Transverse colon (tissue), 4 donors: ENCODE measurements at regions of chr1 and their contacts with region 1.

Region 1: DNA sequence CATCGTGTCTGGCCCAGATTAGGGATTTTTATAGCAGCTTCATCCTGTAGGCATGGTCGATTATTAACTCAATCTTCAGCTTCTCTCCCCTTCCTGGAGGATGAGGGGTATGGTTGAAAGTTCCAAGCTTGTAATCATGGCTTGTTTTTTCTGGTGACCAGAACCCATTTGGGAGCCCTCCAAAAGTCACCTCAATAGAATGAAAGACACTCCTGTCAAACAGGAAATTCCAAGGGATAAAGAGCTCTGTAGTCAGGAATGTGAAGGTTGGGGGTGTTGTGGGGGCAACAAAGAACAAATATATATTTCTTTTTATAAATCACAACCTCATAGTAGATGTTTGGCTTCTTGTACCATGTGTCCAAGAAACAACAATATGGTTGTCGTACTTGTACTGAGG is 212.7 kb upstream of the ESRRG start:
- DNase-seq: no peak
- H3K4me3 ChIP-seq: no peak overlapping the region
- H3K27ac ChIP-seq: no peak overlapping the region
- H3K4me1 ChIP-seq: no peaks in the 10 kb centered on the region
- H3K27me3 ChIP-seq: no peaks in the 10 kb centered on the region
- CTCF ChIP-seq: no peak
- EP300 ChIP-seq: no peak
- POLR2A ChIP-seq: no peak

Region 2: GRCh38 chr1:217004776-217005436 is 69.0 kb after region 1 on chr1:
- in situ Hi-C with region 1: no loop called
- intact Hi-C with region 1: loop called (anchors 2 kb)
- DNase-seq: no peak
- H3K4me3 ChIP-seq: no peak overlapping the region
- H3K27ac ChIP-seq: no peak overlapping the region
- H3K4me1 ChIP-seq: no peaks in the 10 kb centered on the region
- H3K27me3 ChIP-seq: no peaks in the 10 kb centered on the region
- CTCF ChIP-seq: no peak
- EP300 ChIP-seq: no peak
- POLR2A ChIP-seq: no peak